ENCODE measurements at regions of chr9 and their contacts with region 1.

Region 1: GRCh38 chr9:133315997-133316396 is 20.0 kb downstream of the SURF6 start:
- DNase-seq: no peak
- ATAC-seq: no peak
- H3K4me3 ChIP-seq: no peak overlapping the region
- H3K27ac ChIP-seq: no peak overlapping the region
- H3K4me1 ChIP-seq: peaks cover 0 to 5% of the 10 kb centered on the region in 2 experiments; a peak in 2 of 5 replicates
- H3K27me3 ChIP-seq: no peaks in the 10 kb centered on the region
- CTCF ChIP-seq: no peak
- EP300 ChIP-seq: no peak
- POLR2A ChIP-seq: no peak
- RAD21 ChIP-seq: no peak

Region 2: GRCh38 chr9:133225171-133226011 is 90.6 kb before region 1 on chr9:
- CTCF ChIA-PET with region 1: no interaction called
- POLR2A ChIA-PET with region 1: no interaction called
- in situ Hi-C with region 1: loop called (anchors 5 kb)
- intact Hi-C with region 1: no loop called
- DNase-seq: no peak
- ATAC-seq: no peak
- H3K4me3 ChIP-seq: no peak overlapping the region
- H3K27ac ChIP-seq: no peak overlapping the region
- H3K4me1 ChIP-seq: peaks cover 0 to 23% of the 10 kb centered on the region in 2 experiments; a peak in 2 of 5 replicates
- H3K27me3 ChIP-seq: peaks cover 12 to 42% of the 10 kb centered on the region in 2 experiments; a peak in 4 of 5 replicates
- CTCF ChIP-seq: no peak
- EP300 ChIP-seq: no peak
- POLR2A ChIP-seq: no peak
- RAD21 ChIP-seq: no peak

Region 3: GRCh38 chr9:133304477-133305377 is 11.3 kb before region 1 on chr9:
- CTCF ChIA-PET with region 1: no interaction called
- POLR2A ChIA-PET with region 1: no interaction called
- in situ Hi-C with region 1: no loop called
- intact Hi-C with region 1: no loop called
- DNase-seq: no peak
- ATAC-seq: no peak
- H3K4me3 ChIP-seq: no peak overlapping the region
- H3K27ac ChIP-seq: no peak overlapping the region
- H3K4me1 ChIP-seq: peaks cover 3 to 20% of the 10 kb centered on the region in 2 experiments; a peak in 3 of 5 replicates
- H3K27me3 ChIP-seq: peaks cover 0 to 7% of the 10 kb centered on the region in 2 experiments; a peak in 1 of 5 replicates
- CTCF ChIP-seq: no peak
- EP300 ChIP-seq: no peak
- POLR2A ChIP-seq: no peak
- RAD21 ChIP-seq: no peak

Measured in K562 (cell line).